ENCODE measurements at regions of chr12 and their contacts with region 1.

Region 1: DNA sequence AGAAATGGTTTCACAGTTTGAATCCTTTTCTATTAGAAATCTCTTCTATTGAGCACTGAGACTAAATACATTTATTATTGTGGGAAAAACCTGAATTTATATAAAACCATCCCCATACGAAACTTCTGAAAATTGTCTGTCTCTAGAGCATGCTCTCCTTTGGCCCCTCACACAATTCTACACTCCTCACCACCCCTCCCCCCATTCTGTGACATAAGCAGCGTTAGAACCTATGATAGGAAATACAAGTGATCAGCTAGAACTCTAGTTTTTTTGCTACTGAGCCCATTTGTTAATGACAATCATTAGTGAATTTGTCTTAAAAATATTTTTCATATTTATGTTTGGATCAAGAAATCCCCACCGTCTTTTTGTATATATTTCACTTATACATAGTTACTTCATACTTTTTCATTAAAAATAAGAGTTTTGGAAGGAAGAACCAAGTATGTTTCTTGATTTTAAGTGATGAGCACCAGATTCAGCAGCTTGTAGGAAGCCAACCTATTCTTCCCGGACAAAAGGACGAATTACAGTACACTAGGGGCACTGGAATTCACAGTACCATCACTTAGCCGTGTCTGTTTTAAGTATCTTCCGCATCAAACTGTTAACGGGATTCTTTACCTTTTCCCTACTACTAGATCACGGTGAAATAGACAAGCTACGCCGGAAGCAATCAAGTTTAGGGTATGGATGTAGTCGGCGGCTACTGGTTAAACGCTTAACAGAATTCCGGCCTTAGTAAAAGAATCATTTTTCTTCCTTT is 724 bp downstream of the GTSF1 start:
- DNase-seq: no peak

Region 2: GRCh38 chr12:53169644-53170043 is 1303.0 kb before region 1 on chr12:
- intact Hi-C with region 1: loop called in 1 of 2 experiments (anchors 5 kb)
- DNase-seq: no peak

Measured in posterior vena cava (tissue), 2 donors.